PC-9 (cell line): ENCODE measurements at regions of chr20 and their contacts with region 1.

Region 1: GRCh38 chr20:56629670-56630478 is 768 bp downstream of the TFAP2C start:
- DNase-seq: peak; percentile 92 to 94
- H3K4me3 ChIP-seq: peak overlapping the region; percentile 100
- H3K27ac ChIP-seq: peak overlapping the region; percentile 70
- H3K4me1 ChIP-seq: peaks cover 54% of the 10 kb centered on the region
- H3K27me3 ChIP-seq: no peaks in the 10 kb centered on the region
- CTCF ChIP-seq: peak; percentile 94

Region 2: GRCh38 chr20:56554869-56555268 is 75.0 kb before region 1 on chr20:
- CTCF ChIA-PET with region 1: interaction called, 10 read pairs
- POLR2A ChIA-PET with region 1: interaction called, 4 read pairs
- intact Hi-C with region 1: loop called (anchors 1 kb)
- DNase-seq: peak; percentile 77 to 99
- H3K4me3 ChIP-seq: peak overlapping the region; percentile 25; the same call in 1 of the 2 replicates
- H3K27ac ChIP-seq: peak overlapping the region; percentile 76
- H3K4me1 ChIP-seq: peaks cover 27% of the 10 kb centered on the region
- H3K27me3 ChIP-seq: no peaks in the 10 kb centered on the region
- CTCF ChIP-seq: peak; percentile 45

Region 3: DNA sequence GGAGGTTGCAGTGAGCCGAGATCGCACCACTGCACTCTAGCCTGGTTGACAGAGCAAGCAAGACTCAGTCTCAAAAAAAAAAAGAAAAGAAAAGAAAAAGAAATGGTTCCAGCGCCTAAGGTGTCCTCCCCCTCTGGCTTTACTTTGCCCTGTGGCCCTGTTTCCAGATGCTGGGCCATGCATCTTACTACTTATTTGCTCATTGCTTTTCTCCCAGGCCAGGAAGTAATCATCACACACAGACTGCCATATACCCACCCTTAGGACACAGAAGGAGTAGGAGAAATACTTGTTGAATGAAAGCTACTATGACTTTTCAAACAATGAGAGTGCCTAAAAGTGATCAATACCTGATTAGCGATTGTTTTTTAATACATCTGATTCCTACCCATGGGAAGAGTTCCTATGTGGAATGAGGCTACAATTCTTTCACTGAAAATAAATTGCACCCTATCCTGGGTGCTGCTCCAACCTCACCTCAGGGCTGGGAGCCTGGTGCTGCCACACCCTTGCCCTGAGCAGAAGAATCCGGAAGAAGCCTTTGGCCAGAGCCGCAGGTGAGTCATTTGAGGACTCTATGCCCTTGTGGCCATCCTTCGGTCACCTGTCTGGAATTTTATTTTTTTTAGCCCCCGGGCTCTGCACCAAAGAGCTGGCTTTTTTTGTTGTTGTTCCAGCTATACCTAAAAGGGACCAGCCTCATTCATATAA is 23.5 kb before region 1 on chr20:
- CTCF ChIA-PET with region 1: interaction called, 6 read pairs
- POLR2A ChIA-PET with region 1: interaction called, 8 read pairs
- intact Hi-C with region 1: loop called (anchors 1 kb)
- DNase-seq: peak; percentile 95 to 98
- H3K4me3 ChIP-seq: peak overlapping the region; percentile 25; the same call in 1 of the 2 replicates
- H3K27ac ChIP-seq: peak overlapping the region; percentile 94
- H3K4me1 ChIP-seq: peaks cover 65% of the 10 kb centered on the region
- H3K27me3 ChIP-seq: no peaks in the 10 kb centered on the region
- CTCF ChIP-seq: no peak

Region 4: GRCh38 chr20:56616716-56617115 is 13.2 kb before region 1 on chr20:
- CTCF ChIA-PET with region 1: no interaction called
- POLR2A ChIA-PET with region 1: no interaction called
- intact Hi-C with region 1: no loop called
- DNase-seq: no peak
- H3K4me3 ChIP-seq: no peak overlapping the region
- H3K27ac ChIP-seq: no peak overlapping the region
- H3K4me1 ChIP-seq: peaks cover 7% of the 10 kb centered on the region
- H3K27me3 ChIP-seq: no peaks in the 10 kb centered on the region
- CTCF ChIP-seq: no peak

Region 5: DNA sequence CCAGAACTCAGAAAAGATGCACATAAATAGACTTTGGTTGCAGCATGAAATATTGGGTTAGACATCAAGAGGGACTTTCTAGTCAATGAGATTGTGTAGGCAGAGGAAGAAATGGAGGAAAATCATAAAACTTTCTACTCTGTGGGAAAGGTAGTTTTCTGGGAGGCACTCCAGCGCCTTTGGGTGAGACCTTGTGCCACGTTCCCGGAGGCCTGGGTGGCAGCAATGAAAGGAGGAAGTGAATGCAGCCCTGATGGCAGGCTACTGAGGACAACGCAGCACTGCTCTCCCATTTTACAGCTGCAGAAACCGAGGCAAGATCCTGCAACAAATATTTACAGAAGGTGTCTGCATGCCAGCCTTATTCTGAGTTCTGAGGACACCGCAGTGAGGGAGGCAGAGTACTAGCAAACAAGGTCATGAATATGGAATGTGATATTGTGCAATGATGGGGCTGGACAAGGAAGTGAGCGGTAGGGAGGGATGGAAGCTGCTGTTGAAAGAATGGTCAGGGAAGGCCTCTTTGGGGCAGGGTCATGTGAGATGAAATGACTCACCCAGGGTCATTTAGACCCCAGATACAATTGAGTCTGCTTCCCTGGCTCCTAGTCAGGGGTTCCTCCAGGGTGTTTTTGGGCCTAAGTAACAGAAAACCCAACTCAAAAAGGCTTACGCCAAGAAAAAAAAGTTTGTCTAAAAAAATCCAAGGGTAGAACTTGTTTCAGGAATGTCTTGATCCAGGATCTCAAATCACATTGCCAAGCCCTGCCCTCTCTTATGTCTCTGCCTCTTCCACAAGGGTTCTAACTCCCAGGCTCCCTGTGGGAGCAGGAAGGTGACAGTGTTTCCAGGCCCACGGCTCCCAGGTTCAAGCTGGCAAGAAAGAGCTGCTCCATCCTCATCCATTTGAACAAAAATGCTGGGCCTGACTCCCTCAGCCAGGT is 158.4 kb after region 1 on chr20:
- CTCF ChIA-PET with region 1: interaction called, 4 read pairs
- POLR2A ChIA-PET with region 1: no interaction called
- intact Hi-C with region 1: loop called (anchors 2 kb)
- DNase-seq: peak; percentile 82 to 99
- H3K4me3 ChIP-seq: peak overlapping the region; percentile 12; the same call in 1 of the 2 replicates
- H3K27ac ChIP-seq: peak overlapping the region; percentile 96
- H3K4me1 ChIP-seq: peaks cover 46% of the 10 kb centered on the region
- H3K27me3 ChIP-seq: no peaks in the 10 kb centered on the region
- CTCF ChIP-seq: no peak

Region 6: DNA sequence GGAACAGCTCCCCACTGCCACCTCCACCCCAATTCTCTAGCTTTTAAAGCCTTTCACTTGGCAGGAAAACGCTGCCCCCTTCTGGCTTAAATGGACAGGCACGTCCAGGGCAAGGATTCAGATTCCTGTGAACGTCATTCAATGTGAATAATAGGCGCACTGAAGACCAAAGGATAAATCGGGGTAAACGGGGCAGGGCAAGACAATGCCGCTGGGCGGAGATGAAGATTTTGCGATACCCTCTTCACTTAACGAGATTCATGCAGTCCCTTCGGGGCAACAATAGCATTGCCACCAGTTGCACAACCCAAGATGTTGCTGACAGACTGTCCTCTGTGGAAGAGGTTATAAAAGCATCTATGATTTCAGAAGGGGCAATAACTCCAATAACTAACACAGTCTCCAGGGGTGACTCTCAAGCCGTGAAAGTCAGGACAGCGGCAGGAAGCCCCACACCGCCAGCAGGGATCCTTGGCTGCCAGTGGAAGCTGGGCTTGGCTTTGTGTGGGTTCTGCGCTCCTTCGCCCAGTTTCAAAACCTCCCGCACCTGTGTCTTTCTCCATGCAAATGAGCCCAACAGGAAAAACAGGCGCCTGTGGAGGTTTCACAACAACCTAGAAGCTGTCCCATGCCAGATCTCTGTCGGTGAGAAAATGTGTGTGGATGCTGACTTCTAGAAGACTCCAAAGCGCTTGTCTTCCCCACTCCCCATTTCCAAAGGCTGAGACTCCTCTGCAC is 344.8 kb after region 1 on chr20:
- CTCF ChIA-PET with region 1: no interaction called
- POLR2A ChIA-PET with region 1: interaction called, 3 read pairs
- intact Hi-C with region 1: loop called (anchors 1 kb)
- DNase-seq: peak; percentile 69 to 89
- H3K4me3 ChIP-seq: peak overlapping the region; percentile 48; the same call in 1 of the 2 replicates
- H3K27ac ChIP-seq: peak overlapping the region; percentile 57
- H3K4me1 ChIP-seq: peaks cover 26% of the 10 kb centered on the region
- H3K27me3 ChIP-seq: no peaks in the 10 kb centered on the region
- CTCF ChIP-seq: peak; percentile 96

Region 7: GRCh38 chr20:57013718-57014117 is 383.8 kb after region 1 on chr20:
- CTCF ChIA-PET with region 1: no interaction called
- POLR2A ChIA-PET with region 1: no interaction called
- intact Hi-C with region 1: no loop called
- DNase-seq: peak in 1 of 2 experiments; percentile 42
- H3K4me3 ChIP-seq: no peak overlapping the region
- H3K27ac ChIP-seq: no peak overlapping the region
- H3K4me1 ChIP-seq: peaks cover under 1% of the 10 kb centered on the region; the same call in 1 of the 2 replicates
- H3K27me3 ChIP-seq: no peaks in the 10 kb centered on the region
- CTCF ChIP-seq: no peak

Region 8: DNA sequence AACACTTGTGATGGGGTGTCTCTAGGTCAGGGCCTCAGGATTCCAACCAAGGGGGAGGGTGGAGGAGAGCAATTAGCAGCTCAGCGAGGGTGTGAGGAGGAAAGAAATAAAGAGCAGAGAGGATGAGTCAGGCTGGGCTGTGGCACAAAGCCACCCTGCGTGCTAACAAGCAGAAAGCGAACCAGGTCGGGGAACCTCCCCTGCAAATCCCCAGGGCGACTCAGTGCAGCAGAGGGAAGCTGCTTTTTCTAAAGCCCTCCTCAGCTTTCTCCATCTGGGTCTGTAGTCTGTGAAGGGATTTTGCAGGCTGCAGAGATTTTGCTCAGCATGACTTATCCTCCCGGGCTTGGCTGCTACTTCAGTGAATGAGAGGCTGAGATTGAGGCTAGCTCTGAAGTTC is 693.2 kb after region 1 on chr20:
- CTCF ChIA-PET with region 1: no interaction called
- POLR2A ChIA-PET with region 1: interaction called, 6 read pairs
- intact Hi-C with region 1: loop called (anchors 1 kb)
- DNase-seq: peak; percentile 74 to 85
- H3K4me3 ChIP-seq: no peak overlapping the region
- H3K27ac ChIP-seq: peak overlapping the region; percentile 20; the same call in 1 of the 2 replicates
- H3K4me1 ChIP-seq: peaks cover 40% of the 10 kb centered on the region
- H3K27me3 ChIP-seq: no peaks in the 10 kb centered on the region
- CTCF ChIP-seq: no peak